ENCODE measurements at regions of chr15 and their contacts with region 1.

Region 1: DNA sequence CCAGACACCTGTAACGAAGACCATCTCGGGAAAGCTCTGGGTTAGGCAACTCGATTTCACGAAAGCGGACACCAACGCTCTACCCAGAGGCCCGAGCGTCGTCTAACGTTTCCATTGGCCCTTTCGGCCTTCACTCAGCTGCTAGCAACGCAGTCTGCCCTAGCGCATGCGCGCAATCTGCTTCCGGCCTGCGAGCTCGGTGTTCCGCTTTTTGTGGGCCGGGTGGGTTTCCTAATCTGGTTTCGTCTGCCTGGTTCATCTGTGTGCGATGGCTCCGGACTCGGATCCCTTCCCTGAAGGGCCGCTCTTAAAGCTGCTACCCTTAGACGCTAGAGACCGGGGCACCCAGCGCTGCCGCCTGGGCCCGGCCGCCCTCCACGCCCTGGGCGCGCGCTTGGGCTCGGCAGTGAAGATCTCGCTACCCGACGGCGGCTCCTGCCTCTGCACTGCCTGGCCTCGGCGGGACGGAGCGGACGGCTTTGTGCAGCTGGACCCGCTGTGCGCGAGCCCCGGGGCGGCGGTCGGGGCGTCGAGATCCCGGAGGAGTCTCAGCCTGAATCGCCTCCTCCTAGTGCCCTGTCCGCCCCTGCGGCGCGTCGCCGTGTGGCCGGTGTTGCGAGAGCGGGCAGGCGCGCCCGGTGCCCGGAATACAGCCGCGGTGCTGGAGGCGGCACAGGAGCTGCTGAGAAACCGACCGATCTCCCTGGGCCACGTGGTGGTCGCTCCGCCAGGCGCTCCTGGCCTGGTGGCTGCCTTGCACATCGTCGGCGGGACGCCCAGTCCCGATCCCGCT is 24.0 kb upstream of the GATM start:
- DNase-seq: peak; percentile 97 to 98
- H3K4me3 ChIP-seq: peak overlapping the region; percentile 98
- H3K4me3 Mint-ChIP-seq: peak overlapping the region; percentile 93
- H3K27ac Mint-ChIP-seq: peak overlapping the region; percentile 86
- H3K4me1 ChIP-seq: no peaks in the 10 kb centered on the region; the same call in 1 of the 2 replicates
- H3K4me1 Mint-ChIP-seq: peaks cover 6% of the 10 kb centered on the region
- H3K27me3 ChIP-seq: no peaks in the 10 kb centered on the region
- H3K27me3 Mint-ChIP-seq: no peaks in the 10 kb centered on the region
- CTCF ChIP-seq: no peak

Region 2: GRCh38 chr15:45198337-45199135 is 203.8 kb before region 1 on chr15:
- CTCF ChIA-PET with region 1: interaction called, 4 read pairs
- POLR2A ChIA-PET with region 1: interaction called, 5 read pairs
- intact Hi-C with region 1: loop called (anchors 1 kb)
- DNase-seq: peak; percentile 91 to 94
- H3K4me3 ChIP-seq: peak overlapping the region; percentile 59
- H3K4me3 Mint-ChIP-seq: no peak overlapping the region
- H3K27ac Mint-ChIP-seq: no peak overlapping the region
- H3K4me1 ChIP-seq: no peaks in the 10 kb centered on the region
- H3K4me1 Mint-ChIP-seq: peaks cover 7% of the 10 kb centered on the region
- H3K27me3 ChIP-seq: no peaks in the 10 kb centered on the region
- H3K27me3 Mint-ChIP-seq: no peaks in the 10 kb centered on the region
- CTCF ChIP-seq: peak; percentile 68 to 69

Region 3: GRCh38 chr15:45205192-45205591 is 197.2 kb before region 1 on chr15:
- CTCF ChIA-PET with region 1: interaction called, 4 read pairs
- POLR2A ChIA-PET with region 1: interaction called, 5 read pairs
- intact Hi-C with region 1: loop called (anchors 1 kb)
- DNase-seq: peak; percentile 75 to 80
- H3K4me3 ChIP-seq: no peak overlapping the region
- H3K4me3 Mint-ChIP-seq: no peak overlapping the region
- H3K27ac Mint-ChIP-seq: no peak overlapping the region
- H3K4me1 ChIP-seq: 0 out of 2 replicates have a peak, but pooled peaks cover 5% of the 10 kb centered on the region
- H3K4me1 Mint-ChIP-seq: no peaks in the 10 kb centered on the region
- H3K27me3 ChIP-seq: no peaks in the 10 kb centered on the region
- H3K27me3 Mint-ChIP-seq: no peaks in the 10 kb centered on the region
- CTCF ChIP-seq: peak; percentile 78 to 83

Region 4: DNA sequence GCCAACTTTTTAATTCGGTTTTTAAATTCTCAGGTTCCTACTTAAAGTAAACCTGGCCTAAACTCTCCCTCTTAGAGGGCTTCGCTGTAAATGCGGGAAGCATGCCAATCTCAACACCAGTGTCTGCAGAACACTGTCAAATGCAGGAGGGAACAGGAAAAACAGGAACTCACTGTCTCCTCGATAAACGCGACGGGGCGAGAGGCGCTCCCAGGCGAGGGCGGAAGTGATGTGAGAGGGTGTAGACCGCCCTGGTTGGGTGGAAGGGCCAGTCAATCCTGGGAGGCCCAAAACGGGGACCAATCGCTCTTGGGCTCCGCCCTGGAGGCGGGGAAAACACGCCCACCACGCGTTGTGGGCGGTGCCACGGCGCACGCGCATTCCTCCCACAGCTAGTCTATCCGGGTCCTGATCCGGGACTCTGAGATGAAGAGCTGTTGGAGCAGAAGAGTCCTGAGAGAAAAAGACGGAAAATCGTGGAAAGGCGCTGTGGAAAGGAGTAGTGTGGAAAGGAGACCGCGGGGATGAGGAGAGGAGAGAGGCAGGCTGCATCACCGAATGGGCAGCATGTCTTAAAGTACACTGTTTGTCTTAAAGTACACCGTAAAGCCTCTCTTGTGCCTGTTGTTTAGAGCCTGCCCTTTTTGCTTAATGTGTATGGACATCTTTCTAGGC is 123.2 kb before region 1 on chr15:
- CTCF ChIA-PET with region 1: no interaction called
- POLR2A ChIA-PET with region 1: interaction called, 4 read pairs
- intact Hi-C with region 1: loop called (anchors 1 kb)
- DNase-seq: peak; percentile 98
- H3K4me3 ChIP-seq: peak overlapping the region; percentile 62
- H3K4me3 Mint-ChIP-seq: peak overlapping the region; percentile 80
- H3K27ac Mint-ChIP-seq: peak overlapping the region; percentile 74
- H3K4me1 ChIP-seq: peaks cover 15% of the 10 kb centered on the region
- H3K4me1 Mint-ChIP-seq: peaks cover 2% of the 10 kb centered on the region
- H3K27me3 ChIP-seq: no peaks in the 10 kb centered on the region
- H3K27me3 Mint-ChIP-seq: no peaks in the 10 kb centered on the region
- CTCF ChIP-seq: no peak

Region 5: DNA sequence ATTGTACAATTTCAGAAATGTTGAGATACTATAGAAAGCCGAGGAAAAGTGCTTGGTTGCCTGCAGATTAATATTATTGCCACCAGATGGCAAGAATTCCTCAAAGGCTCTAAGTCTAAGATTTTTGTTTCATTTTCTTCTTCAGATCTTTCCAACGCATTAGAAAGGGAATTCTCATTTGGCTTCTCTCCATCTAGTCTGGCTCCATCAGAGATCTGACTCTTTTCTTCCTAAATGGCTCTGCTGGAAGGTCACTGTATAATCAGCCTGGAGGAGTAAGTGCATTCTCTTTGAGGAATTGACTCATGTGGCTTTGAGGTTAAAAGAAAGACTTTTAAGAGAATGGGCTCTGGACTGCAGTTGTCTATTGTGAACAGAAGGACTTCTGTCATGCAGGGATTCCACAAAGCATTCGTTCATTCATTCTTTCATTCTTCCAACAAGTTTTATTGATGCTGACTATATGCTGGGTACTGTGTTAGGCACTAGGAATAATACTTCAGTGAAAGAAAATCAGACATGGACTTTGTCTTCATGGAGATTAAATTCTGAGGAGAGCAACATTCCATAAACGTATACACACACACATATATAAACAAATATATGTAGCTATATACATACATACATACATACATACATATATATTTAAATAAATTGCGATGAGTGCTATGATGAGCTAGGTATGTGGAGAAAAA is 95.0 kb before region 1 on chr15:
- CTCF ChIA-PET with region 1: interaction called, 6 read pairs
- POLR2A ChIA-PET with region 1: interaction called, 6 read pairs
- intact Hi-C with region 1: loop called (anchors 1 kb)
- DNase-seq: peak in 1 of 2 experiments; percentile 29
- H3K4me3 ChIP-seq: no peak overlapping the region
- H3K4me3 Mint-ChIP-seq: peak overlapping the region; percentile 9
- H3K27ac Mint-ChIP-seq: peak overlapping the region; percentile 23
- H3K4me1 ChIP-seq: peaks cover 51% of the 10 kb centered on the region
- H3K4me1 Mint-ChIP-seq: peaks cover 40% of the 10 kb centered on the region
- H3K27me3 ChIP-seq: no peaks in the 10 kb centered on the region
- H3K27me3 Mint-ChIP-seq: no peaks in the 10 kb centered on the region
- CTCF ChIP-seq: peak; percentile 50 to 62

Region 6: GRCh38 chr15:45442500-45443135 is 40.3 kb after region 1 on chr15:
- CTCF ChIA-PET with region 1: no interaction called
- POLR2A ChIA-PET with region 1: no interaction called
- intact Hi-C with region 1: no loop called
- DNase-seq: no peak
- H3K4me3 ChIP-seq: no peak overlapping the region
- H3K4me3 Mint-ChIP-seq: no peak overlapping the region
- H3K27ac Mint-ChIP-seq: no peak overlapping the region
- H3K4me1 ChIP-seq: peaks cover 14% of the 10 kb centered on the region
- H3K4me1 Mint-ChIP-seq: peaks cover 6% of the 10 kb centered on the region
- H3K27me3 ChIP-seq: no peaks in the 10 kb centered on the region
- H3K27me3 Mint-ChIP-seq: no peaks in the 10 kb centered on the region
- CTCF ChIP-seq: no peak

Region 7: DNA sequence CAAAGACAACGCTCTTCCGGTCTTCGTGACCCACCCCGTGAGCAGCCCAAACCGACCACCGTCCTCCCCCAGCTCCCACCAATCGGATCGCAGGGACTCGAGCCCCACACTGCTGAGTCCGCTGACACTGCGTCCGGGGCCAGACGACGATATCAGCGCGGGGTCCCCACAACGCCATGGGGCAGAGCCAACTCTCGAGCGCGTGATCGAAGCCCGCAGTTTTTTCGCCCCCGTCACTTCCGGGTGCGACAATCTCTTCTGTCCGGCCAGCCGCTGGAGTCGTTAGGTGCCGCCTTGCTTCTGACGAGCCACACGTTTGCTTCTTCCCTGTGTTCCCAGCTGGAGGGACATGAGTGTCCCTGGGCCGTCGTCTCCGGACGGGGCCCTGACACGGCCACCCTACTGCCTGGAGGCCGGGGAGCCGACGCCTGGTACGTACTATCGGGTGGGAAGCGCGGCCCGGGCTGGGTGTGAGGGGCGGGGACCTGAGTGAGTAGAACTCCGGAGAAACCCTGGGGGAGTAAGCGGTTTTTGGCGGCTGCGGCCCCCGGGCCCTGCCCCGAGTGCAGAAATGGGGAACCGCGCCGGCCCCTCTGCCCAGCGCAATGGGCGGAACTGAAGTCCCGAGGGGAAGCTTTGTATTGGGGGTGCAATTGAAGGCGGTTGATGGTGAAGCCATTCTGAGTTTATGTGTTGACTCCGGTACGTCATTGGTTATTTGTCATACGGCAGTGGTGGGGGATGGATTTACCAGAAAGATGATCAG is 184.9 kb after region 1 on chr15 and contains the start of gene BLOC1S6:
- CTCF ChIA-PET with region 1: no interaction called
- POLR2A ChIA-PET with region 1: interaction called, 3 read pairs
- intact Hi-C with region 1: loop called (anchors 2 kb)
- DNase-seq: peak; percentile 90
- H3K4me3 ChIP-seq: peak within 1 kb of the TSS; percentile 72
- H3K4me3 Mint-ChIP-seq: peak within 1 kb of the TSS; percentile 81
- H3K27ac Mint-ChIP-seq: peak within 1 kb of the TSS; percentile 100
- H3K4me1 ChIP-seq: peaks cover 18% of the 10 kb centered on the region
- H3K4me1 Mint-ChIP-seq: peaks cover 8% of the 10 kb centered on the region
- H3K27me3 ChIP-seq: no peaks in the 10 kb centered on the region
- H3K27me3 Mint-ChIP-seq: no peaks in the 10 kb centered on the region
- CTCF ChIP-seq: no peak
- total RNA-seq, gene BLOC1S6: 37.0 and 40.3 TPM in 2 replicates